ENCODE measurements at regions of chr13 and their contacts with region 1.

Region 1: GRCh38 chr13:32586080-32586900 is at the start of gene PDS5B:
- DNase-seq: peak; percentile 96
- ATAC-seq: peak; percentile 97 to 99 (median 98)
- H3K4me3 ChIP-seq: peak within 1 kb of the TSS; percentile 55 to 90 (median 82)
- H3K27ac ChIP-seq: peak within 1 kb of the TSS; percentile 90 to 96 (median 93)
- H3K4me1 ChIP-seq: peaks cover 0 to 42% (median 28%) of the 10 kb centered on the region in 9 donors
- H3K27me3 ChIP-seq: no peaks in the 10 kb centered on the region
- CTCF ChIP-seq: peak; percentile 79 to 99 (median 94)
- total RNA-seq, gene PDS5B: 16.3 to 29.6 (median 20.6) TPM

Region 2: GRCh38 chr13:31824705-31825517 is 761.4 kb before region 1 on chr13:
- intact Hi-C with region 1: loop called in 1 of 10 experiments (anchors 10 kb)
- DNase-seq: peak in 1 of 2 donors; percentile 37
- ATAC-seq: peak; percentile 60 to 79 (median 70)
- H3K4me3 ChIP-seq: no peak overlapping the region
- H3K27ac ChIP-seq: no peak overlapping the region
- H3K4me1 ChIP-seq: peaks cover 0 to 17% (median 0%) of the 10 kb centered on the region in 9 donors
- H3K27me3 ChIP-seq: no peaks in the 10 kb centered on the region
- CTCF ChIP-seq: peak in 7 of 9 donors; percentile 37 to 69 (median 58)

Region 3: DNA sequence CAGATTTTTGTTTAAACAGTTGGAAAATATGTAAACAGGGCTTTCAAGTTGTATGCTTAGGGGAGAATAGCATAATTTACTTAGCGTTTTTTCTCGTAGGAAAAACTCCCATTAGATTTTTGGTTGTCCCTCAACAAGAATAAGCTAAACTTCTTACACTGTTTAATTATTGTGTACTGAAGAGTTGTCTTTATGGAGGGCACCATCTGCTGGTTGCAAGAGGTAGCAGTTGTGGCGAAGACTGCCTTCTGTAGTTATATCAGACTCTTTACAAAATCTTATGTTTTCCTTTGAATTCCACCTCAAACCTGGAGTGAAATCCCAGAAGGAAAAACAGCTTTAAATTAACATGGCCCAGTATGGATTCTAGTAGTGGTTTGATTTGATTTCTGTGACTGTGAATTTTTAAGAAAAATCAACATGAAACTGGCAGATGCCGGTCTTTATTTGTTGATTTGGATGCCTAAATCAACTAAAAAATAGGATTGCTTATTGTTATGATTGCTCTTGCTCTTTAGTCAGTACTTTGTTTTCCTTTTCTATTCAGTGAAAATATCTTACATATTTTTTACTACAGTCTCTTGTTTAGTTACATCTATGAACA is 53.3 kb after region 1 on chr13:
- intact Hi-C with region 1: loop called (anchors 1 to 5 kb)
- DNase-seq: peak in 1 of 2 donors; percentile 65
- ATAC-seq: peak; percentile 69 to 92 (median 86)
- H3K4me3 ChIP-seq: no peak overlapping the region
- H3K27ac ChIP-seq: no peak overlapping the region
- H3K4me1 ChIP-seq: peaks cover 0 to 35% (median 8%) of the 10 kb centered on the region in 9 donors
- H3K27me3 ChIP-seq: no peaks in the 10 kb centered on the region
- CTCF ChIP-seq: peak; percentile 60 to 95 (median 84)

Region 4: DNA sequence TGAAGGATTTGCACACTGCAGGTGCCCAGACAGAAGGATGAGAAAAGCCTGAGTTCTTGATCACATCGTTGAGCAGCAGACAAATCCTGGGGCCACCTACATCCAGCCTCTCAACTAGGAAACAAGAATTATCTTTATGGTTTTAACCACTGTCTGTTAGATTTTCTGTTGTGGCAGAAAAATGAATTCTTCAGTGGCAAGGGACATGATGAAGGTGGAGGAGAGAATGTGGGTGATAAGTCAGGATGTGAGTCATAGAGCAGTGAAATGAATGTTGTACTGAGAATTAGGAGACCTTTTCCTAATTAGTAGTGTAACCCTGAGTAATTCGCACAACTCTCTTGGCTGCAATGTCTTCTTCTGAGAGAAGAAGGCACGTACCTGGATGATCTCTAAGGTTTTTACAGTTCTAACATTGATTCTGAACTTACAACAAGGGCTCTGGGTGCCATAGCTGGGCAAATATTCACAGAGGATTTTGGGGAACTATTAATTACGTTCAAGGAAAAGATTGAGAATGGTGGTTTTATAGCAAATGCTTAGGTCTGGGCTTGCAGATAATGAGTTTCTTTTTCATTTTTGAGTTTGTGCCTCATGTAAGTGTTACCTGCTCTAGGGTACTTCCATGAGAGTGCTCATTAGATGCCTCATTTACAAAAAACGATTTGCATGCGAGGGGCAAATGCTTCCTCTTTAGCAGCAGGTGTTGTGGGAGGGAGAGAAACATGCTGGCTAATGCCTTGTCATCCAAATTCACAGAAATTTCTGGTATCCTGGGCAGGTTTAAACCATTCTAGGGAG is 319.0 kb after region 1 on chr13:
- intact Hi-C with region 1: loop called in 1 of 10 experiments (anchors 5 kb)
- DNase-seq: no peak
- ATAC-seq: no peak
- H3K4me3 ChIP-seq: no peak overlapping the region
- H3K27ac ChIP-seq: peak overlapping the region in 6 of 10 donors; percentile 0 to 64 (median 37)
- H3K4me1 ChIP-seq: peaks cover 0 to 19% (median 3%) of the 10 kb centered on the region in 9 donors
- H3K27me3 ChIP-seq: no peaks in the 10 kb centered on the region
- CTCF ChIP-seq: no peak

Region 5: DNA sequence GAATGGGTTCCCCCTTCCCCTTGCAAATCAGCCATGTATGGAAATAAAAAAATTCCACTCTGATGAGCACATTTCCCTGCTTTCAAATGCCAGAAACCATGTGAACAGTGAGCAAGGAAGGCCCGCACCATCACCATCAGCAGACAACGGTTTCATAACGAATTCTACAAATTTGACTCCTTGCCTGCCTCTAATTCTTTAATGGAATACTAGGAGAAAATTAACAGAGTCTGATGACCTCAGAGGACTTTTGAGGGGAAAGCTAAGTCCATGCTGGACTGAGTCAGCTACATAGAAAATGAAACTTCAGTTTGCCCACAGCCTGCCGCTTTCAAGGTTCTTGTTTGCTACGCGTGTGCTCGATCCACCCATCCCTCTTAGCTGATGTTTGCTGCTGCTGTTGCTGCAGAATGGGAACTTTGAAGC is 383.2 kb after region 1 on chr13:
- intact Hi-C with region 1: no loop called
- DNase-seq: peak in 1 of 2 donors; percentile 29
- ATAC-seq: peak in 7 of 8 donors; percentile 78 to 88 (median 84)
- H3K4me3 ChIP-seq: peak overlapping the region in 7 of 10 donors; percentile 12 to 40 (median 33)
- H3K27ac ChIP-seq: peak overlapping the region; percentile 27 to 90 (median 78)
- H3K4me1 ChIP-seq: peaks cover 0 to 28% (median 18%) of the 10 kb centered on the region in 9 donors
- H3K27me3 ChIP-seq: no peaks in the 10 kb centered on the region
- CTCF ChIP-seq: no peak

Region 6: DNA sequence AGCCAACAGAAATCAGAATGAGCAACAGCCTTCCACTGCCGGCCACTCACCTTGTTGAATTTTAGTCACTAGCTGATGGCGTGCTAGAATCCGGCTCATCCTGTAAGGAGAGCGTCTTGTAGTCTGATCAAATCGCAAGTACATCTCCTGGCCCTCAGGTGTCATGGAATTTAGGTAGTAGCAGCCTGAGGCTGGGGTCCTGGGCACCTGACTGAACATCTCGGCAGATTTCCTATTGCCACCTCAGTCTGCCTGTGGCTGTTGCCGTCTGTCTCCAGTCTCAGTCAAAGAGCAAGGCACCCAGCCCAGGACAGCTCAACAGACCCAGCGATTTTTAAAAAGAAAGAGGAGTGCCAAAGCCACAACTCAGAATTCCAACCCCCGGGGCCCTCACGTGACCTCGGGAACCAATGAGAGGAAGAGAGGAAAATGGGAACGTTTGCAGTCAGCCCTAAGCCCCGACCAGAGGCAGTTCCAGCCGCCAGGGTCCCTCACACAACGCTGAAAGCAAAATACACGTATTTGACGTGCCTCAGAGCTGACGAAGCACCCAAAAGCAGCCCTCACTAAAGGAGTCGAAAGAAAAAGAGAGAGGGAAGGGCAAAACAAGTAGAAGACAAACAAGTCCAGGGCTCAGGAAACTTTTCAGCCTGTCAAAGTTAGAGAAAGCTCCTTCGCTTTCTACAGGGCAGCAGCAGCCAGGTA is 699.3 kb after region 1 on chr13 and contains the start of gene STARD13:
- intact Hi-C with region 1: loop called in 1 of 10 experiments (anchors 5 kb)
- DNase-seq: peak; percentile 89 to 97
- ATAC-seq: peak; percentile 95 to 97 (median 96)
- H3K4me3 ChIP-seq: peak within 1 kb of the TSS; percentile 59 to 84 (median 72)
- H3K27ac ChIP-seq: peak within 1 kb of the TSS; percentile 84 to 98 (median 95)
- H3K4me1 ChIP-seq: peaks cover 5 to 60% (median 47%) of the 10 kb centered on the region in 9 donors
- H3K27me3 ChIP-seq: no peaks in the 10 kb centered on the region
- CTCF ChIP-seq: peak; percentile 15 to 69 (median 40)
- total RNA-seq, gene STARD13: 18.2 to 38.3 (median 28.5) TPM

Region 7: DNA sequence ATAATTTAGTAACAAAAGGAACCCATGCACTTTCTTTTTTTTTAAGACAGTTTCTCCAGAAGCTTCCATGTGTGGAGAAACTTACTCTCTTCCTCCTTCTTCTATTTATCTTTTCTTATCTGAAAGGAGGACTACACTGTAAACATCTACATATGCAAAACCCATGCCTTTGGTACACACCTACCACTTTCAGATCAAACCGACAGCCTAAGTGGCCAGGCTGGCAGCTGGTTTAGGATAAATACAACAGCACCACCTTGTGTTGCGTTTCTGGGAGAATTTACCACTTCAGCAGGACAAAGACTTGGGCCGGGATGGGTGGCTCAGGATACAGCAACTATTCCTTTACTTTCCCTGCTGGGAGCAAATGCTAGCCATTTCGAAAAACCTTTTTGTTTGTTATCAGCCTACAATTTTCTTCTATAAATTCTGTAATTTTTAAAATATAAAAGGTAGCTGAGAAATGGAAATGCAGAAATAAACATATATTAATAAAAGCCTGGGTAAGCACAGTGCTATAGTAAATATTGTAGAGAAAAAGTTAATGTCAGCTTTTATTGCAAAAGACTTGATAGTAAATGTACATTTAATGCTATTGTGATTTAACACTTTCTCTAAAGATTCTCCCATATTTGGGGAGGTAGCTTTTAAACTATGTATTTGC is 1137.6 kb after region 1 on chr13:
- intact Hi-C with region 1: loop called in 5 of 10 experiments (anchors 5 to 10 kb)
- DNase-seq: peak; percentile 27 to 86
- ATAC-seq: peak; percentile 83 to 94 (median 88)
- H3K4me3 ChIP-seq: no peak overlapping the region
- H3K27ac ChIP-seq: peak overlapping the region in 7 of 10 donors; percentile 62 to 84 (median 77)
- H3K4me1 ChIP-seq: peaks cover 6 to 55% (median 36%) of the 10 kb centered on the region in 9 donors
- H3K27me3 ChIP-seq: no peaks in the 10 kb centered on the region
- CTCF ChIP-seq: peak; percentile 41 to 90 (median 78)